BJ (cell line): ENCODE measurements at regions of chr11 and their contacts with region 1.

Region 1: DNA sequence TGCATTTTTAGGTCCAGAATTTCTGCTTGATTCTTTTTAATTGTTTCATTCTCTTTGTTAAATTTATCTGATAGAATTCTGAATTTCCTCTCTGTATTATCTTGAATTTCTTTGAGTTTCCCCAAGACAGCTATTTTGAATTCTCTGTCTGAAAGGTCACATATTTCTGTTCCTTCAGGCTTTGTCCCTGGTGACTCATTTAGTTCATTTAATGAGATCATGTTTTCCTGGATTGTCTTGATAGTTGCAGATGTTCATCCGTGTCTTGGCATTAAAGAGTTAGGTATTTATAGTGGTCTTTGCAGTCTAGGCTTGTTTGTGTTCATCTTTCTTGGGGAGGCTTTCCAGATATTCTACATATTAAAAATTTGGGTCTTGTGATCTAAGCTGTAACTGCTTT is 694.8 kb upstream of the CCDC179 start:
- DNase-seq: peak; percentile 48
- H3K4me3 ChIP-seq: no peak overlapping the region
- H3K27me3 ChIP-seq: no peaks in the 10 kb centered on the region
- CTCF ChIP-seq: no peak

Region 2: DNA sequence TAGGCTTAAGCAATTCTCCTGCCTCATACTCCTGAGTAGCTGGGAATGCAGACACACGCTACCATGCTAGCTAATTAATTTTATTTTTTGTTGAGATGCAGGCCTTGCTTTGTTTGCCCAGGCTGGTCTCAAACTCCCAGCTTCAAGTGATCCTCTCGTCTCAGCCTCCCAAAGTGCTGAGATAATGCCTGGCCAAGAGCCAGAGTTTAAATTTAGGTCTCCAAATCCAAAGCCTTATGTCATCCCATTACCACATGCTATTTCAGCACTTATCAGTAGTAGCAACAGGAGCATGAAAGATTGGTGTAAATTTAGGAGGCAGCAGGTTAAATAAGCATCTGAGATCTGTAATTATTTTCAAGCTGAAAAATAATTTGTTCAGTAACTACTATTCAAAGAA is 1688.3 kb before region 1 on chr11:
- CTCF ChIA-PET with region 1: no interaction called
- POLR2A ChIA-PET with region 1: interaction called, 20 read pairs
- DNase-seq: no peak
- H3K4me3 ChIP-seq: no peak overlapping the region
- H3K27me3 ChIP-seq: no peaks in the 10 kb centered on the region
- CTCF ChIP-seq: no peak

Region 3: DNA sequence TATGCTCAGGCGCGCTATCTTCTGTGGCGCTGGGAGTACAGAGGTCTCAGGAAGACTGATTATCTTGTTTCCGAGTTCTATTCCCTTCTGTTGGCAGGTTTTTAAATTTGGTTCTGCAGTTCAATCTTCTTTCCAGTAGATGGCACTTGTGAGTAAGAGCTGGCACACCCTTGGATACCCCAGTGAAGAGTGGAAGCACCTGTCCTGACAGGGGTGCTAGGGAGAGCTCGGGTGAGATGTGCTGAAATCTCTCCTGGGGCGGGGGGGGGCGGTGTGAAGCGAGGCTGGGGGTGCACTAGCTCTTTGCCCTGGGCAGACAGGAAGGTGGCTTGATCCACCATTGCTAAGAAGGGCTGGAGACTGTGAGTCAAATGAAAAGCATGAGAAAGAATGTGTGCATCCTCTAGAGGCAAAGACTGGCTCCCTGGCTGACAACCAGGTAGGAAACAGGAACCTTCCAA is 15.0 kb before region 1 on chr11:
- CTCF ChIA-PET with region 1: interaction called, 14 read pairs
- POLR2A ChIA-PET with region 1: no interaction called
- DNase-seq: no peak
- H3K4me3 ChIP-seq: no peak overlapping the region
- H3K27me3 ChIP-seq: no peaks in the 10 kb centered on the region
- CTCF ChIP-seq: peak; percentile 83

Region 4: GRCh38 chr11:23573429-23573828 is 18.3 kb after region 1 on chr11:
- CTCF ChIA-PET with region 1: no interaction called
- POLR2A ChIA-PET with region 1: no interaction called
- DNase-seq: no peak
- H3K4me3 ChIP-seq: no peak overlapping the region
- H3K27me3 ChIP-seq: no peaks in the 10 kb centered on the region
- CTCF ChIP-seq: no peak